Left cardiac atrium (tissue), 4 donors: ENCODE measurements at regions of chr3 and their contacts with region 1.

Region 1: DNA sequence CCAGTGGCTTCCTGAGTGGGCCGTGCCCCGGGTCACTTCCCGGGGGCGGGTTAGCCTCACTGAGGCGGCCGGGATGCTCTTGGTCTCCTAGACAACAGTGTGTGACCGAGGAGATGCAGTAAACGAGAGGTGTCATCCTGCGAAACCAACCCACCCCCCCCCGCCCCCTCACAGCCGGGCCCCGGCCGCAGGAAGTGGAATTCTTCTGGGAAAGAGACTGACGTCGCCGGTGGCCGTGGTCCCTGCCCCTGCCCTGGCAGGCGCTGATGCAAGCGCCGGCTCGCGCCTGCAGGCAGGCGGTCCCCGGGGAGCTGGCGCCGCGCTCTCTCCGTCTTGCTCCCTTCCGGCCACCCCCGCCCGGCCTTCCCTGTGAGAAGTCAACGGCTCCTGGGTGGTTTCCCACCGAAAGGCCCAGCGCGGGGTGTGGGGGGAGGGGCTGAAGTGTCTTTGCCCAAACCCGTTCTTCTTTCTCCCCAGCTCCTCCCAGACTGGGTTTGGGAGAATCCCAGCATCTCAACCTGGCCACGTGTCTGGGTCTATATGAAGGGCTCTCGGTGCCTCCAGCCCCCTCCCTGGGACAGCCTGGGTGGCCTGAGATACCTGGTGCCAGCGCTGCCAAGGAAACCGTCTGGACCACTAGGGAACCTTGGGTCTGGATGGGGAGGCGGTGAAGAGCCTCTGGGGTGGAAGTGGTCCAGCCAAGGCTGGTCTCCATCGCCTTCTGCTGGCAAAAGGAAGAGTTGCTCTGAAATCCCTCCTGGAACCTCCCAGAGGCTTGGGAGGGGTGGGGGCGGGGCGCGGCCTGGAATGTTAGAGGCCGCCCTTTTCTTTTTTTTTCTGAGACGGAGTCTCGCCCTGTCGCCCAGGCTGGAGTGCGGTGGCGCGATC is 47.3 kb downstream of the BHLHE40 start:
- DNase-seq: peak; percentile 95
- ATAC-seq: peak; percentile 90 to 92

Region 2: GRCh38 chr3:4711689-4711992 is 314.9 kb before region 1 on chr3:
- intact Hi-C with region 1: loop called in 1 of 2 experiments (anchors 2 kb)
- DNase-seq: no peak
- ATAC-seq: peak in 1 of 2 donors; percentile 3

Region 3: DNA sequence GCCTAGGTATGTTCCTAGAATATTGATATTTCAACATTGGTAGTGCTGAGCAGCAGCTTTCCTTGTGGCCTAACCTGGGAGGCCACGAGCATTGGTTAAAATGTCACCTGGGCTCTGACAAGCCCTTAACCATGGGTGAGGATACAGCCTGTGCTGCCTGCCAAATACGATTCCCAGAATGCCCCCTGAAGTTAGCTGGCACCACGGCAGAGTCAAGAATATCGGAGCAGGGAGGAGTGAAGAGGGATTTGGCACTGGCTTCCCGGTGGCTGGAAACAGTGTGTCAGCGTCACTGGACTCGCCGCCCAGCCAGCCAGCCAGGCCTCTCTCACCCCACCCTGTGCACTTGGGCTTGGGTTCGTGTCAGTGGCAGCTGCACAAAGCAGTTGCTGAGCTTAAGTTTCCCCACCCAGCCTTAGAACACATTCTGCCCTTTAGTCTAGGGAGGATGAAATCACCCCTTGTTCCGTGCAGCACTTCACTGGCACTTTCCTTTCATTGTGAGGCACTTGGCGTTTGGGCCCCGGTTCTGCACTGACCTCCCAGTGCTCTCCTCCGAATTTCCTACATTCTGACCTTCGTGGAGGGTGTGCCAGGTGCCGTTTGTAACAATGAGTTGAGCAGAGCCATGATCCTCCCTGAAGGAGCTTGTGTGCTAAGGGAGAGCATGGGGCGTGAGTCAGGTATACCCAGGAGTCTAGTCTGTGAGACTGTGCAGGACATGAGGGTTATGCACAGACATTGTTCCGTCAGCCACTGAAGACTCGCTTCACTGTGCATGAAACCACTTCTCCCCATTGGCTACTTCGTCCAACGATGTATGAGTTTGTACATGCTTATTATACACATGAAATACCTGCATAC is 200.1 kb before region 1 on chr3:
- intact Hi-C with region 1: loop called in 1 of 2 experiments (anchors 2 kb)
- DNase-seq: peak; percentile 92
- ATAC-seq: peak; percentile 82 to 85

Region 4: DNA sequence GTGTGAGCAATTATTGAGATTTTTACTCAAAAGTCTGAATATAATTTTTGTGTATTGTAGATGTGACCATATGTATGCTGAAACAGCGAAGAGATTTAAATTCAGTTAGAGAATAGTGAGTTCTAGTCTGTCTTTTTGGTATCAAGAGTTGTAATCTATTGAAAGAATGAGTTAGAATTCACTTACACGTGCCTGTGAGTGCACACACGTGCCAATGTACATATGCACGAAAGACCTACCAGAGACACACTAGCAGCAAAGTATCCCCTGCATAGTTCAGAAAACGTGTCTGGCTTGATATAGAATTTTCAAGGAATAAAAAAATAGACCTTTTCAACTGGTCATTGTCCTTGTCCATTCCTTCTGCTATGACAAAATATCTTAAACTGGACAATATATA is 112.1 kb before region 1 on chr3:
- intact Hi-C with region 1: no loop called
- DNase-seq: no peak
- ATAC-seq: no peak

Region 5: DNA sequence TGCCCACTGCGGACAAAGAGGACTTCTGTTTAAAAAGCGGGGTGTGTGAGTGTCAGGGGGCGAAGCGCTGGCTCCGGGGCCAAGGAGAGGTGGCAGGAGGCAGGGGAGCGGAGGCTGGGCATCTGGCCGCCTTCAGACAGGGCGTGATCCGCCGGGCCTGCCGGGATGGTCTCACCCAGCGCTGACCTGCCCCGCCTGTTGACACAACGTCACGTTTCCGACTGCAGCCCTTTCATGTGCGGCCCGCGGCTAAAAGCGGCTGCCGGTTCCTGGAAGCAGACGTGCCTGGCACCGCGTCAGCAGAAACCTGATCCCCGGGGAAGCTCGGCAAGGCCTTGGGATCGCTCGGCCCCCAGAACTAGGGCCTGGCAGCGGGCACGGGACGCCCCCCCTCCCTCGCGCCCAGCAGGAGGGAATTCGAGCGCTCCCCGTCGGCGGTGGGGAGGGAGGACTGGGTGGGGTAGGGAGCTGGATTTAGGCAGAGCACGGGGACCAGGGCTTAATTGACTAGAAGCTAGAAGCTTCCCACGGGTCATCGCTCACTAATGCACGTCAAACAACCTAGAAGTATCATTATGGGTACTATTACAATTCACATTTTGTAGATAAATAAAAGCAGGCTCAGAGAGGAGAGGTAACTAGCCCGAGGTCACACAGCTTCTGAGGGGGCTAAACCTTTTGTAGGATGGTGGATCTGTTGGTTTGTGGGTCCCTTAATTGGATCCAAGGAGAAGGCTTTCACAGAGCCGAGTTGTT is 39.6 kb before region 1 on chr3:
- intact Hi-C with region 1: loop called (anchors 2 to 5 kb)
- DNase-seq: peak; percentile 99
- ATAC-seq: peak; percentile 88 to 89